Gastrocnemius medialis (tissue), 4 donors: ENCODE measurements at regions of chr17 and their contacts with region 1.

Region 1: DNA sequence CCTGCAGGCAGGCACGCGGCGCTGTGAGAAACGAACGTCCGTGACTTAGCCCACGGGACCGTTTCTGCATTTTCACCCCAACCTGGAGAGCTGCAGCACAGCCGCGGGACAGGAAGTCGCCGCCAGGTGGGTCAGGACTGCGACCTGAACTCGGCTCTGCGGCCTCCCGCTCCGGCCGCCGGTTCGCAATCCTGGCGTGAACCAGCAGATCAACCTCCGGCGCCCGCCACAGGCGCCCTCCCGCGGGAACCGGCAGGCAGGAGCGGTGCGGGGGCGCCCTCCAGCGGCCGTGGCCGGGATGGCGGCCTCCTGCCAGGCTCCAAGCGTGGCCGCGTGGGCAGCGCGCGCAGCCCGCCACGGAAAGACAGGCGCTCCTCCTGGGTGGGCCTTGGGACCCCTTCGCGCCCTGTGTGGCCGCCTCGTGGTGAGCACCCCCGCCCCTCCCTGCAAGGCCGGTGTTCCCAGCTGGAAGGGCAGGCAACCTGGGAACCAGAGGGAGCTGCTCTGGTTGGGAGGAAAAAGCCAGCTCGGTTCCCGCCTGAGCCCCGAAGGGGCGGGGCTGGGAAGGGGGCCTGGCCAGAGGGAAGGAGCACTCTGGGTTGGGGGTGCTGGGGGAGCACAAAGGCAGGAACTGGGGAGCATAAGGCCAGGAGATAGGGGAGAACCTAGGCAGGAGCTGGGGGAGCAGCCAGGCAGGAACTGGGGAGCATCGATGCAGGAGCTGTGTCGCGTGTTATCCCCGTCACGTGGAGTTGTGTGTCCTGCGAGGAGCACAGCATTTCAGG is 28.2 kb downstream of the ACTG1 start:
- DNase-seq: peak; percentile 76 to 84
- ATAC-seq: peak; percentile 56 to 60
- H3K4me3 ChIP-seq: peak overlapping the region; percentile 41 to 74 (median 58)
- H3K27ac ChIP-seq: peak overlapping the region in 3 of 4 donors; percentile 52 to 57 (median 57)
- H3K4me1 ChIP-seq: peaks cover 30 to 38% of the 10 kb centered on the region in 2 donors
- H3K27me3 ChIP-seq: no peaks in the 10 kb centered on the region
- CTCF ChIP-seq: peak; percentile 87 to 100 (median 100)
- POLR2A ChIP-seq: no peak

Region 2: GRCh38 chr17:81253358-81254131 is 230.8 kb before region 1 on chr17:
- in situ Hi-C with region 1: loop called in 2 of 4 experiments (anchors 10 to 25 kb)
- intact Hi-C with region 1: loop called (anchors 1 kb)
- DNase-seq: peak in 1 of 2 donors; percentile 28
- ATAC-seq: peak; percentile 21 to 22
- H3K4me3 ChIP-seq: no peak overlapping the region
- H3K27ac ChIP-seq: no peak overlapping the region
- H3K4me1 ChIP-seq: peaks cover 17 to 19% of the 10 kb centered on the region in 2 donors
- H3K27me3 ChIP-seq: no peaks in the 10 kb centered on the region
- CTCF ChIP-seq: peak; percentile 82 to 92 (median 87)
- POLR2A ChIP-seq: no peak

Region 3: GRCh38 chr17:81401723-81402529 is 82.5 kb before region 1 on chr17:
- in situ Hi-C with region 1: no loop called
- intact Hi-C with region 1: loop called (anchors 2 kb)
- DNase-seq: peak in 1 of 2 donors; percentile 54
- ATAC-seq: no peak
- H3K4me3 ChIP-seq: peak overlapping the region in 1 of 4 donors; percentile 28
- H3K27ac ChIP-seq: peak overlapping the region; percentile 98 to 99 (median 99)
- H3K4me1 ChIP-seq: peaks cover 57 to 74% of the 10 kb centered on the region in 2 donors
- H3K27me3 ChIP-seq: no peaks in the 10 kb centered on the region
- CTCF ChIP-seq: peak in 1 of 5 experiments; percentile 39
- POLR2A ChIP-seq: no peak

Region 4: DNA sequence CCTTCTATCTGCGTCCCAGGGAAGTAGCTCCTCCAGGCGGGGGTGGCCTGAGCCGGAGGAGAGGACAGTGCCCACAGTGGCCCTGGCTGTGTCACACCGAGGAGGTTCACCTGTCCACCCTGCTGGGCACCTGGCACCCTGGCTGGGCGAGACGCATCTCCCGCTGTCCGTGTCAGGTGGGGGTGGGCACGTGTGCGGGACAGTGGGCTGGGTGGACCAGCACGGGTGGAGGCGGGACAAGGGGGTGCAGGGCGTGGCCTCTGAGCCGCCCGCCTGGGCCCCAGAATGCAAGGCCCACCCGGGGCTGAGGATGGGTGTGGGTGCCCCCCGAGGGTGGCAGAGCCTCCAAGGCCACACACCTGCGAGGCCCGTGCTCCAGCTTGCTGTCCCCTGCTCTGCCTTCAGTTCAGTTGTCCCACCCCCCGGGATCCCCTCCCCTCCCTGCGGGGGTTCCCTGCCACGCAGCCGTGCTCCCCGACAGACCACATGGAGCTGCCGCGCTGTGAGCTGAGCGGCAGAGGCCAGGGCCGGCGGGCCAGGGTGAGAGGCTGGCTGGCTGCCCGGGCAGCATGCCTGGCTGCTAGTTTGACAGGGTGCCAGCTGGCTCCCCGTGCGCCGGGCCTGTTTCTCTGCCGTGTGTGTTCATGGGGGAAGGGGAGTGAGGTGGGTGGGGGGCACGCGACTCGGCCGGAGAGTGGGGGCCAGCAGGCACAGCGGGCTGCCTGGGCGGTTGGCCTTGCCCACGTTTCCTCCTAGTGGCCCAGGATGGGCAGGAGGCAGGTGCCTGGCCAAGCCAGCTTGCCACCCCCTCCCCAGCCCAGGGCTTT is 55.2 kb before region 1 on chr17:
- in situ Hi-C with region 1: no loop called
- intact Hi-C with region 1: loop called (anchors 2 kb)
- DNase-seq: peak in 1 of 2 donors; percentile 59
- ATAC-seq: peak; percentile 19 to 21
- H3K4me3 ChIP-seq: peak overlapping the region; percentile 0 to 30 (median 14)
- H3K27ac ChIP-seq: peak overlapping the region; percentile 75 to 94 (median 85)
- H3K4me1 ChIP-seq: peaks cover 39 to 44% of the 10 kb centered on the region in 2 donors
- H3K27me3 ChIP-seq: no peaks in the 10 kb centered on the region
- CTCF ChIP-seq: no peak
- POLR2A ChIP-seq: no peak

Region 5: DNA sequence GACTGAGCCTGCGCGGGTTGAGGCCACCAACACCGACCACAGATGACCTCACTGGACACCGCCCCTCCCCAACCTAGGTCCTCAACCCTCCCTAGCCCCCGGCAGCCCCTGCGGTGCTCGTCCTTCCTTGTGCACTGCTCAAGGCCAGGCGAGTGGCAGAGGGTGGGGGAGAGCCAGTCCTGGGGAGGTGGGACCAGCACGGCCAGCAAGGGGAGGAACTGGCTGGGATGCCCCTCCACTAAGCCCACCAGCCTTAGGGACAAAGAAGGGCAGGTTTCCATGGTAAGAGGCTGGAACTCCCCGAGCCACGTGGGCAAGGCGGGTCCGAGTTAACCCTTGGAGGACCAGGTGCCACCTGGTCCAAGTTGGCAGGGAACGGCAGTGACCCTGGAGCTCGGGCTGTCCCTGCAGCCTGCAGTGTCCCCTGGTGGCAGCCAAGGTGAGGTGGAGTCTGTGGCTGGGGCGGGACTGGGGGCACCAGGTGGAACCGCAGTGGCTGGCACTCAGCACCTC is 53.0 kb after region 1 on chr17:
- in situ Hi-C with region 1: no loop called
- intact Hi-C with region 1: loop called (anchors 5 kb)
- DNase-seq: peak in 1 of 2 donors; percentile 43
- ATAC-seq: peak; percentile 42 to 72
- H3K4me3 ChIP-seq: no peak overlapping the region
- H3K27ac ChIP-seq: no peak overlapping the region
- H3K4me1 ChIP-seq: peaks cover 10 to 14% of the 10 kb centered on the region in 2 donors
- H3K27me3 ChIP-seq: peaks cover 27 to 35% (median 28%) of the 10 kb centered on the region in 3 donors
- CTCF ChIP-seq: peak; percentile 84 to 95 (median 92)
- POLR2A ChIP-seq: no peak

Region 6: DNA sequence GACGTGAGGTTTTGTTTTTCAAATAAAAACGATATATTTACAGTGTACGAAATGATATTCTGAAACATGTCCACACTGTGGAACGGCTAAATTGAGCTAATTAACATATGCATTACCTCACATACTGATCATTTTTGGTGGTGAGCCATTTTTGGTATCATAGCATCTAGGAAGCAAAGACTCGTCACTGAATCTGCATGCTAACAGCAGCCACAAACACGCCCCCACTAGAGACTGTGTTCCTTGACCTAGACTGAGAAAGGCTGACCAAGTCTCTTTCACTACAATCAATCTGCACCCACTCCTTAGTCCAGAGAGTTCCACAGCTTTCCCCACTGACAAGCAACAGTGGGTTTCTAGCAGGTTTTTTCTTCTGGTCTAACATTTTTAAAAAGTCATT is 123.0 kb after region 1 on chr17:
- in situ Hi-C with region 1: no loop called
- intact Hi-C with region 1: no loop called
- DNase-seq: no peak
- ATAC-seq: no peak
- H3K4me3 ChIP-seq: no peak overlapping the region
- H3K27ac ChIP-seq: no peak overlapping the region
- H3K4me1 ChIP-seq: no peaks in the 10 kb centered on the region
- H3K27me3 ChIP-seq: no peaks in the 10 kb centered on the region
- CTCF ChIP-seq: no peak
- POLR2A ChIP-seq: no peak